Right lobe of liver (tissue), 6 donors: ENCODE measurements at regions of chr15 and their contacts with region 1.

Region 1: DNA sequence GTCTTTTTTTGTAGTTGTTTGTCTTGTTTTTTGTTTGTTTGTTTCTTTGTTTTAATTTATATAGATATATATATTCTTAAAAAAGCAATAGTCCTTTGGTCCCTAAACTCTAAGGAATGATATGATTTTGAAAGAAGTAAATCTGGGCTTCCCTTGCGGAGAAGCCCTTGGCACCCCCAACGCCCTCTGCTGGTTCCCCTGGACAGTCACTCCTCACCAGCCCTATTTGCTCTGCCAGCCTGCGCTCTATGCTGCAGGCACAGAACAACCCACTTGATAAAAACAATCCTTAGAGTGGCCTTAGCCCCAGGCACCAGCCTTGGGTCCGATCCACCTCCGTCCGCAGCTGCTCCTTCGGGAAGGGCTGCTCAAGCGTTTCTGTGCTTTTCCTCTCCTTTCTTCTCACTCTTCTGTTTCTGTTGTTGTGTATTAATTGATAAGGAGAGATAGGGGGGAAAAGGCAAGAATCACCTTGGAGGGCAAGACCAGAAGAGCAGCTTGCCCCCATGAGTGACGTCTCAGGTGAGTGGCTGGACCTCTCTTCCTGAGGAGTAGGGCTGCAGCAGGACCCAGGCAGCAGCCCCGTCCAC is 13.7 kb upstream of the PARP6 start:
- DNase-seq: peak in 2 of 3 donors; percentile 60 to 68
- ATAC-seq: peak; percentile 73 to 87 (median 84)
- H3K4me3 ChIP-seq: no peak overlapping the region
- H3K27ac ChIP-seq: no peak overlapping the region
- H3K4me1 ChIP-seq: peaks cover 0 to 5% (median 2%) of the 10 kb centered on the region in 4 donors
- H3K27me3 ChIP-seq: no peaks in the 10 kb centered on the region
- CTCF ChIP-seq: peak; percentile 36 to 71 (median 64)
- POLR2A ChIP-seq: no peak

Region 2: GRCh38 chr15:72199711-72200212 is 86.3 kb before region 1 on chr15:
- intact Hi-C with region 1: loop called (anchors 10 kb)
- DNase-seq: peak; percentile 74 to 87 (median 82)
- ATAC-seq: peak; percentile 92 to 97 (median 94)
- H3K4me3 ChIP-seq: no peak overlapping the region
- H3K27ac ChIP-seq: no peak overlapping the region
- H3K4me1 ChIP-seq: peaks cover 0 to 5% (median 0%) of the 10 kb centered on the region in 4 donors
- H3K27me3 ChIP-seq: peaks cover 0 to 8% of the 10 kb centered on the region in 2 donors
- CTCF ChIP-seq: peak; percentile 93 to 96 (median 94)
- POLR2A ChIP-seq: no peak